Activated CD8-positive, alpha-beta T cell treated with anti-CD3 and anti-CD28 coated beads for 36 hours (primary cell): ENCODE measurements at regions of chr1 and their contacts with region 1.

Region 1: GRCh38 chr1:158793604-158794003 is 12.6 kb upstream of the OR6N2 start:
- DNase-seq: peak; percentile 41
- ATAC-seq: peak; percentile 56
- H3K4me3 Mint-ChIP-seq: no peak overlapping the region
- H3K27ac Mint-ChIP-seq: no peak overlapping the region
- H3K4me1 Mint-ChIP-seq: no peaks in the 10 kb centered on the region
- H3K27me3 Mint-ChIP-seq: peaks cover 4% of the 10 kb centered on the region
- CTCF ChIP-seq: peak; percentile 35

Region 2: DNA sequence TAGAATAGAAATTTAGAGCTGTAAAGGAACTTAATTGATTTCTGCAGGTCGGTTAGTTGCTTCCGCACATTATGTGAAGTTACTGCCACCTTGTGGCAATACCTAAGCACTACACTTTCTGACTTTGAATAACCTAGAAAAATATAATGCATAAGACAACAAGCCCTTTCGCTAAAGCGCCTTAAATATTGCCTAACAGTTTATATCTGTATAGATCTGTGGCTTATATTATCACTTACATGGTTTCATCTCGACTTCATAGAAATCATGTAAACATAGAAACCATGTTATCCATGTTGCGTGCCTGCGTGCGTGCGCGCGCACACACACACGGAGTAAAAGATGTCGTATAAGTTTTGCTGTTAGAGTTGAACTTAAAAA is 205.2 kb after region 1 on chr1:
- CTCF ChIA-PET with region 1: interaction called, 34 read pairs
- POLR2A ChIA-PET with region 1: no interaction called
- intact Hi-C with region 1: loop called (anchors 5 kb)
- DNase-seq: peak; percentile 62
- ATAC-seq: peak; percentile 72
- H3K4me3 Mint-ChIP-seq: no peak overlapping the region
- H3K27ac Mint-ChIP-seq: peak overlapping the region; percentile 78
- H3K4me1 Mint-ChIP-seq: peaks cover 25% of the 10 kb centered on the region
- H3K27me3 Mint-ChIP-seq: no peaks in the 10 kb centered on the region
- CTCF ChIP-seq: peak; percentile 86